Panc1 (cell line): ENCODE measurements at regions of chr1 and their contacts with region 1.

Region 1: GRCh38 chr1:26254404-26254803 is 20.4 kb downstream of the CEP85 start:
- DNase-seq: no peak
- ATAC-seq: no peak
- H3K4me3 ChIP-seq: no peak overlapping the region
- H3K27ac ChIP-seq: no peak overlapping the region
- H3K4me1 ChIP-seq: no peaks in the 10 kb centered on the region
- H3K27me3 ChIP-seq: no peaks in the 10 kb centered on the region
- CTCF ChIP-seq: no peak

Region 2: DNA sequence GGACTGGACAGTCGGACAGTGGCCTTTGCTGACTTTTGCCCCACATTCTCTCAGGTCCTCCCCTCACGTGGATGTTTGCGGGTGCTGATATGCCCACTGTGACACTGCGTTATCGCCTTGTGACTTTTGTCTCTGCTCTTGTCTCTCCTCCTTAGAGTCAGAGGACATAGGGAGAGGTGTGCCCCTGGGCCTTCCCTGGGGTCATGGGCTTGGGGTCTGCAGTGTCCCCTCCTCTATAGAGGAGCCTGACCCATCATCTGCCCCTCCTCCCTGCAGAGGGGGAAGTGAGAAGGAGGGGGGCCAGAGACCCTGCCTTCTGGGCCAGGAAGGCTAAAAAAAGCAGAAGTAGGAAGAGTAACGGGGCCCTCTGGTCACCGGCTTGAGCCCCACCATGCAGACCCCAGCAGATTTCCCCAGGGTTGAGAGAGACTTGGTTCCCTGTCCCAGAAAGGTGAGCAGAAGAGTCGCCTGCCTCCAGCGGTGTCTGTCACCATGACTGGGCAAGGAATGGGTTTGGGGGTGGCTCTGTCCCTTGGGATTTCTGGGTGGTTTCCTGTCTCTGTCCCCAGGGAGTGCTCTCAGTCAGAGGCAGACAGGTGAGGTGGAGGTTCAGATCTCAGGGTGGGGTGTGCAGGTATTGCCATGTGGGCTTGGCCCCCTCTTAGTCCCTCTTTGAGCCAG is 288.5 kb after region 1 on chr1:
- CTCF ChIA-PET with region 1: interaction called, 13 read pairs
- POLR2A ChIA-PET with region 1: no interaction called
- in situ Hi-C with region 1: no loop called
- intact Hi-C with region 1: no loop called
- DNase-seq: no peak
- ATAC-seq: no peak
- H3K4me3 ChIP-seq: no peak overlapping the region
- H3K27ac ChIP-seq: no peak overlapping the region
- H3K4me1 ChIP-seq: peaks cover 3% of the 10 kb centered on the region; the same call in 1 of the 2 replicates
- H3K27me3 ChIP-seq: no peaks in the 10 kb centered on the region
- CTCF ChIP-seq: no peak